Activated naive CD4-positive, alpha-beta T cell treated with anti-CD3 and anti-CD28 coated beads for 36 hours (primary cell): ENCODE measurements at regions of chr15 and their contacts with region 1.

Region 1: DNA sequence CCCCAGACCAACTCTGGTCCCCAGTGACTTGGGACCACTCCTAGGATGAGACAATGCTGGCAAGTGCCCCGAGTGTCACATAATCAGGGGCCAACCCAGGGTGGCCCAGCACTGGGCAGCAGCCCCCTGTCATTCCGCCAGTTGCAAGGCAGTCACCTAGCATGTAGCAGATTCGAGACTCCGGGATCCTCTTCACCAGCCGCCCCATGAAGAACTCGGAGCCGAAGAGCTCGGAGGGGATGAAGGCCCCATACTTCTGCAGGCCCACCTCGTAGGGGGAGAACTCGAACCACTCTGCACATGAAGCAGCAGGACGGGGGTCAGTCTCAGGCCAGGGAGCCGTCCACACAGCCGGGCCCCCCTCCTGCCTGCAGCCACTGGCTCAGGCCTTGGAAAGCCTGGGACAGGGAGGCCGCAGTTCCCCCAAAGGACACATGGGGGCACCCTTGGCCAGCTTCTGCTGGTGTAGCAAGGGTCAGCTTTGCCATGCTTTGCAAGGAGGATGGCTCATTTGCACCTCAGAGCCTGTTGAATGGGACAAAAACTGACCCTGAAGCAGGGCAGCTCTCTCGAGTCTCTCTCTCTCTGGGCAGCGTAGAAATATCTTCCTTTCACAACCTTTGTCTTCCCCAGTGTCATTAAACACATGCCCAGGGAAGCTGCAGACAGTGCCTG is 17.0 kb upstream of the EHD4 start:
- DNase-seq: peak; percentile 93
- H3K4me3 Mint-ChIP-seq: no peak overlapping the region
- H3K27ac Mint-ChIP-seq: no peak overlapping the region
- H3K4me1 Mint-ChIP-seq: no peaks in the 10 kb centered on the region
- H3K27me3 Mint-ChIP-seq: peaks cover 3% of the 10 kb centered on the region

Region 2: GRCh38 chr15:41999290-42000285 is 10.2 kb after region 1 on chr15:
- CTCF ChIA-PET with region 1: interaction called, 20 read pairs
- intact Hi-C with region 1: no loop called
- DNase-seq: no peak
- H3K4me3 Mint-ChIP-seq: no peak overlapping the region
- H3K27ac Mint-ChIP-seq: no peak overlapping the region
- H3K4me1 Mint-ChIP-seq: no peaks in the 10 kb centered on the region
- H3K27me3 Mint-ChIP-seq: no peaks in the 10 kb centered on the region

Region 3: DNA sequence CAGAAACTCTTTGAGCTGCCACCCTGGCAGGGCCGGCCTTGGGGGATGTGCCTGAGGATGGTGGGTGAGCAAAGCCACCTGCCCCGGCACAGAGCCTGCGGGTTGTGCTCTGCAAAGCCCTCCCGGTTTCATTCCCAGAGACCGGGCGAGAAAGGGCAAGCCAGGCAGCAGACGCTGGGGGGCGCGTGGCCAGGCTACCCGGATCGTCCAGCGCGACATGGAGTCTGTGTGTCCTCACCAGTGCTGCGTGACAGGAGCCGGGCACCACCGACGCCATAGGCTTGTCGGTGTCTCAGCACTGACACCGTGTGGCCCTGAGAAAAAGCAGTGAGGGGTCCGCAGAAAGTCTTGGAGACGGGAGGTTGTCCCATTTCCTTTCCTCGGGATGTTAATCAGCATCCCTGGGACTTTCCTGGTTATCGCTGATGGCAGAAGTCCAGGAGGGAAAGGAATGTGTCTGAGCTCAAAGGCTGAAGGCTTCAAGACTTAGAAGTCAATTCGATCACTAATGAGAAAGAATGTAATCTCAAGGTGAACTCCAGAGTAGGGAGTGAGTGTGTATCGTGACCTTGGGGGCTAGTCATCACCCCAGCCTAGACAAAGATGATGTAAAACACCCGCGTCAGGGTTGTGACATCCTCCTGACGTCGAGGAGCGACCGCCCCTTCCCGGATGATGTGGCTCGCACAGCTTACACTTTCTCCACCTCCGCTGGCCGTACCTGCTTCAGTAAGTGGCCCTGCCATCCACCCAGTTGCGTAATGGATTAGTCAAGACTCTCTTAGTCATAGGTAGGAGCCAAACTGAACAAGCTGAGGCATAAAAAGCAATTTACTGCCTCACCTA is 67.8 kb after region 1 on chr15:
- CTCF ChIA-PET with region 1: interaction called, 94 read pairs
- intact Hi-C with region 1: loop called (anchors 1 kb)
- DNase-seq: peak; percentile 73
- H3K4me3 Mint-ChIP-seq: peak overlapping the region; percentile 33
- H3K27ac Mint-ChIP-seq: no peak overlapping the region
- H3K4me1 Mint-ChIP-seq: peaks cover 13% of the 10 kb centered on the region
- H3K27me3 Mint-ChIP-seq: peaks cover 20% of the 10 kb centered on the region

Region 4: GRCh38 chr15:42079401-42079908 is 90.1 kb after region 1 on chr15:
- CTCF ChIA-PET with region 1: interaction called, 65 read pairs
- intact Hi-C with region 1: loop called (anchors 1 kb)
- DNase-seq: no peak
- H3K4me3 Mint-ChIP-seq: no peak overlapping the region
- H3K27ac Mint-ChIP-seq: no peak overlapping the region
- H3K4me1 Mint-ChIP-seq: peaks cover 2% of the 10 kb centered on the region
- H3K27me3 Mint-ChIP-seq: peaks cover 6% of the 10 kb centered on the region

Region 5: DNA sequence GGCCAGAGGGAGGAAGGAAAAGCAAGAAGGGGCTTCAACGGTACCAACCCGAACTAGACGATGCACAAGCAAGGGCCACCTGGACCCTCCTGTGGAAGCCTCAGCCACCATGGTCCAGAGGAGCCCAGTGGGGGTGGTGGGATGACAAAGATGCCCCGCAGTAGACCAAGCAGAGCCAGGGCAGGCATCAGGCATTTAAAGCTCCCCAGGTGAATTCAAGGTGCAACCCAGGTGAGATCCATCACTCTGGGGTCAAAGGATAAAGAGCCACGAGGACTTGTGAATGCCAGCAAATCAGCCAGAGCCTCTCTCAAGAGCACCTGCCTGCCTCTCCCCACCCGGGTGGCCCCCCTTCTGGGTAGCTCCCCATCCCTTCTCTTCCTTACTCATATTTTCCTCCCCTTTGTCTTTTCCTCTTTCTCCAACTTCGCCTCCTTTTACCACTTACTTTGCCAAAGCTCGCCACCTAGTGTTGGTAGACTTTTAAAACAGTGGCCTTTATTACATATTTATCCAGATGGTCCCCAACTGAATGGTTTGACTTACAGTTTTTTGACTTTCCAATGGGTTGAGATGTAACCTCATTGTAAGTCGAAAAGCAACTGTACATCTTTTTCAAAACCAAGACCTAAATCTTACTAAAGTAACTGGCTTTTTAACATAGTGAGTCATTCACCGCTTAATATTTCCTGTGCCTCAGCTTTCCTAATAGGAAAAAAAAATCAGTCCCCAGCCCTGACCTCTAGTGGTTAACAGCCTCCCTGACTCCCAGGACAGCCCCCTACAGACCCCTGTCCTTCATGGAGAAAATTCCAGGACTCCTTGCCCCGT is 148.2 kb after region 1 on chr15:
- CTCF ChIA-PET with region 1: interaction called, 4 read pairs
- intact Hi-C with region 1: loop called (anchors 1 kb)
- DNase-seq: peak; percentile 53
- H3K4me3 Mint-ChIP-seq: no peak overlapping the region
- H3K27ac Mint-ChIP-seq: no peak overlapping the region
- H3K4me1 Mint-ChIP-seq: no peaks in the 10 kb centered on the region
- H3K27me3 Mint-ChIP-seq: no peaks in the 10 kb centered on the region

Region 6: GRCh38 chr15:42364529-42364928 is 375.1 kb after region 1 on chr15:
- CTCF ChIA-PET with region 1: no interaction called
- intact Hi-C with region 1: no loop called
- DNase-seq: no peak
- H3K4me3 Mint-ChIP-seq: no peak overlapping the region
- H3K27ac Mint-ChIP-seq: no peak overlapping the region
- H3K4me1 Mint-ChIP-seq: no peaks in the 10 kb centered on the region
- H3K27me3 Mint-ChIP-seq: no peaks in the 10 kb centered on the region